ENCODE measurements at regions of chr1 and their contacts with region 1.

Region 1: DNA sequence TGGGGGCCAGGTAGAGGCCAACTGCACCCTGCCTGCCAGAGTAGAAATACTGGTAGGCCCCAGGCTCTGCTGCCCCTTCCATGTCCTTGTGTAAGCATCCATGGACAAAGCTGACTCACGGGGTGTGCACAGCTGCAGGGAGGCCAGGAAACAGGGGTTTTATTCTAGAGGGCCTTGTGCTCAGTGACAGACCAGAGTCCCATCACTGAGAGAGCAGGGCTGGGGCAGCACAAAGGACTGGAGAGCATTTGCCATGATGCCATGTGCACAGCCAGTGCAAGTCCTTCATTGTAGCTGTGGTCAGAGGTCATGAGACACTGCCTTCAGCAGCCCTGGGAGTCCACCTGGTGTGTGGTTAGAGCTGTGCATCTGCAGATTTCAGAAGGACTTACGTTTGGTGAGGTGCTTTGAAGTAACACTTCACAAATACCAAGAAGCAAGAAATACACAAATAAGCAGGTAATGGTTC is 8.1 kb downstream of the ARF1 start:
- DNase-seq: peak; percentile 9
- H3K4me3 Mint-ChIP-seq: no peak overlapping the region
- H3K27ac Mint-ChIP-seq: peak overlapping the region; percentile 74
- H3K4me1 Mint-ChIP-seq: peaks cover 76% of the 10 kb centered on the region
- H3K27me3 Mint-ChIP-seq: no peaks in the 10 kb centered on the region

Region 2: DNA sequence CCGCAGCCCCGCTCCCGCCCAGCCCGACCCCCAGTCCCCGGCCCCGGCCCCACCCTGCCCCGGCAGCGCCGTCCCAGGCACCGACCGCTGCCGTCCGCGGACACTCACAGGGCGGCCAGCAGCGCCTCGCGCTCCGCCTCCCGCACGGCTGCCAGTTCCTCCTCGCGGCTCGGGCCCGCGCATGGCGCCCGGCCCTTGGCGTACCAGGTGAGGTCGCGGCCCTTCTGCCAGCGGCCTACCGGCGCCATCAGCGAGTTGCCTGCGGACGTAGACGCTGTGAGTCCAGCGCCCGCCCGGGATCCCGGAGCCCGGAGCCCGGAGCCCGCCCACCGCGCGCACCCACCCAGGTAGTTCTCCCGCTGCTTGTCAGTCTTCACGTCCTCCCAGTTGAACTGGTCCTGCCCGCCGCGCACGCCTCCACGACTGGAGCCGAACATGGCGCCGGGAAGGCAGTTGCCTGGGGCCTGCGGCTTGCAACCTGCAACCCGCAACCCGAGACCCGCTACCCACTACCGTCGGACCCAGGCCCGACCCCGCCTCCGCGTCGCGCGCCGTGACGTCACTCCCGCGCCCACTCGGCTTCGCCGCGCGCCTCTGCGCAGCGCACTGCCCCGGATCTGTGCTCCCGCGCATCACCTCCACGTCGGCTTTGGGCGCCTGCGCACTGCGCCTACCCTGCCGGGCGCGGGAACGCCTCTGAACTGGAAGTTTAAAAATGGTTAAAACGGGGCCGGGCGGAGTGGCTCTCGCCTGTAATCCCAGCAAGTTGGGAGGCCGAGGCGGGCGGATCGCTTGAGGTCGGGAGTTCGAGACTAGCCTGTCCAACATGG is 12.4 kb after region 1 on chr1 and contains the start of gene C1orf35:
- CTCF ChIA-PET with region 1: interaction called, 10 read pairs
- POLR2A ChIA-PET with region 1: interaction called, 3 read pairs
- intact Hi-C with region 1: no loop called
- DNase-seq: peak; percentile 96
- H3K4me3 Mint-ChIP-seq: peak within 1 kb of the TSS; percentile 91
- H3K27ac Mint-ChIP-seq: peak within 1 kb of the TSS; percentile 88
- H3K4me1 Mint-ChIP-seq: peaks cover 28% of the 10 kb centered on the region
- H3K27me3 Mint-ChIP-seq: no peaks in the 10 kb centered on the region
- total RNA-seq, gene C1orf35: 21.9 to 22.1 TPM